ENCODE measurements at regions of chr17 and their contacts with region 1.

Region 1: GRCh38 chr17:80575057-80575875 is 30.6 kb downstream of the RPTOR start:
- DNase-seq: peak; percentile 93

Region 2: GRCh38 chr17:80389011-80389995 is 186.0 kb before region 1 on chr17:
- CTCF ChIA-PET with region 1: no interaction called
- POLR2A ChIA-PET with region 1: no interaction called
- DNase-seq: no peak

Region 3: DNA sequence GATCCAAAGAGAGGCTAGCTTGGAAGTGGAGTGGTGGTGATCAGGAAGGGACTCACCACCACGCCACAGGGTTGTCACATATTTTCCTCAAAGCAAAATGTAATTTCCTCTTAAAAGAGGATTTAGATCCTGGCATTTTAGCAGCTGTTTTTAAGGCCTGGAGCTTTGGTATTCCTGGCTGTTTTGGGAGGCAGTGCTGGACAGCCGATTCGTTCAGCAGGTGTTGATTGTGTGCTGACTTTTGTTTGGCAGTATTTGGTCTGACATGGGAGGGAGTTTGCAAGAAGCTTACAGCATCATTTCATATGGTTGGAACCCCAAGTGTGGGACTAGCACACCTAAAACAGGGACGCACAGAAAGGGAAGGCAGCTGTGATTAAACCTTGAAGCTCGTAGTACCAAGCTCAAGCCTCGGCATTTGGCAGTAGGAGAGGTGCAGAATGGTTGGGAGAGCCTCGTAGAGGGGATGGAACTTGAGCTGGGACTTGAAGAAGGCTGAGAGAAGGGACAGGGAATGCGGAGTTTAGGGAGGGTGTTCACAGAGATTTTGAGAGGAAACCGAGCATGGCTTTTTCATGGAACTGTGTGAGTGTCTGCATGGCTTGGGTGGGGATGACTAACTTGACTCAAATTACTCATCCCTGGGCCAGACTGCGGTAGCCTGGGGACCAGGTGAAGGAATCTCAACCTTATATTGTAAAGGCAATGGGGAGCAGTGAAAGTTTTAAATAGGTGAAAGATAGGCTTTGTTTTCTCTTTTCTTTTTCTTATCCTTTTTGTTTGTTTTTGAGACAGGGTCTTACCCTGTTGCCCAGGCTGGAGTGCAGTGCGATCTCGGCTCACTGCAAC is 21.7 kb after region 1 on chr17:
- CTCF ChIA-PET with region 1: interaction called, 10 read pairs
- POLR2A ChIA-PET with region 1: no interaction called
- DNase-seq: no peak

Measured in HEK293T (cell line).